MCF 10A (cell line): ENCODE measurements at regions of chr7 and their contacts with region 1.

Region 1: DNA sequence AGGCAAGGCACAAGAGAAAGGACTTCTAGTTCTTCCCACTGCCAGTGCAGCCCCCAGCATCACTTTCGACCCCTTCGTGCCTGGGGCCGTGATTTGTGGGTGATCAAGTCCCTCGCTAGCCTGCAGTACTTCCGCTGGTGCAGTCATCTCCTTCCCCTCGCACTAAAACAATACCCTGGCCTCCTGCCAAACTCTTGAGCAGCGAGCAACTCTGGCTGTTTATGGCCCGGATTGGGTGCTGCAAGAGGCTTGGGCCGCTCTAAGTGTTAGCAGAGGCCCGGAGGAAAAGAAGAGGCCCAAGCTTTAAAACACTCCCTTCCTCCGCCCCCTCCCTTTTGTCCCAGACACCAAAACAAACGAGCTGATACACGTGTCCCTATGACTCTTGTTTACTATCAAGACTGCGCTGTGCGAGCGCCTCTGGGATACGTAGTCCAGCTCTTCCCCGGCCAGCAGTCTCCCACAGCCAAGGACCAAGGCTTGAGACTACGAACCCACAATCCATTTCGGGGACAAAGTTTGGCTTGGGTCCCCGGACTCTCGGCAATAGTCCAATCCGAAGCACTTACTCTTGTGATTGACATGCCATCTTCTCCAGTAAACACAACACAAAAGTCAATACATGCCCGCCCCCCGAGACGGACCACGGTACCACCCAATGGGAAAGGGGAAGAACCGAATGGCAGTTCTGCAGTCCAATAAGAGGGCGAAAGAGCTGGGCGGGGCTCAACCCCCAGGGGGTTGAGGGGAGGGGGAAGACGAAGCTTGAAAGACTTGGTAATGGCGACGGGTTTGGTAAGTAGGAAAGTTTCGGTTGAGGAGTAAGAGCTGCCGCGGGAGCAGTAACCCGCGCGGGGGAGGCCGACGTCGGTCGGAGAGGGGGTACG is at the start of gene HBP1:
- DNase-seq: peak; percentile 100
- H3K4me3 Mint-ChIP-seq: peak within 1 kb of the TSS; percentile 93
- H3K27ac Mint-ChIP-seq: peak within 1 kb of the TSS; percentile 100
- H3K4me1 Mint-ChIP-seq: peaks cover 10% of the 10 kb centered on the region
- H3K27me3 Mint-ChIP-seq: no peaks in the 10 kb centered on the region
- CTCF ChIP-seq: no peak
- total RNA-seq, gene HBP1: 30.2 and 37.0 TPM in 2 replicates

Region 2: DNA sequence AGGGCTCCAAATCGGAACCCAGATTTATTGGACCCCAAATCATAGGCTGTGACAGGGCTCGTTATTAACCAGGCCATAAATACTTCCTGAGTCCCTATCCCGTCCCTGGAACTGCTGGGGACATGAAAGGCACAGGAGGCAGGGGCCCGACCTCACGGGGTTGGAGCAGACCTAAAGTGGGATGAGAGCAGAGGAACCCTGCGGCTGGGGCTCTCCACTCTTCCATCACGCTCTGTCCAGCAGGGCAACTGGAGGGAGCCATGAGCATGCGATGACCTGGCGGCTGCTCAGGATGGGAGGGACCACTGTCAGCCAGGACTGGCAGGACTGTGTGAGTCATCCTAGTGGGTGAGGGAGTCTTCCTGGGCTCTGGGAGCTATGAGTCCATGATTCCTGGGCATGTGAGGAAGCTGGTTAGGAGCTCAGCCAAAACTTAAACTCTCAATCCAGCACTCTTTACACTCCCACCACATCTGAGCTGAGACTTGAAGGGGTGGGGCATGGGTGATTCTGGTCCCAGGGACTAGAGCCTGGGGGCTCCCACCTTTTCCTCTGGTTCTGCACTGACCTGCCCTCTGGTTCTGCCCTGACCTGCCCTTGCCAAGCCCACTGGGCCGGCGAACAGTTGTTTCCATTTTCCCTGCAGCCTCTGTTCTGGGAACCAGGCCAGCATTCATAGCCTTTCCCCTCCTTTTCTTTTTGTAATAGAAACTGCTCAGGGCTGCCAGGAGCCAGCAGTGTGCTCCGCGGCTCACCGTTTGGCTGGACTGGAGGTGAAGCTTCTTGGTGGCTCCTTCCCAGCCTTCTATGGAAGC is 1103.5 kb before region 1 on chr7:
- CTCF ChIA-PET with region 1: no interaction called
- POLR2A ChIA-PET with region 1: interaction called, 5 read pairs
- intact Hi-C with region 1: loop called (anchors 10 kb)
- DNase-seq: peak; percentile 99
- H3K4me3 Mint-ChIP-seq: peak overlapping the region; percentile 60
- H3K27ac Mint-ChIP-seq: peak overlapping the region; percentile 86
- H3K4me1 Mint-ChIP-seq: peaks cover 66% of the 10 kb centered on the region
- H3K27me3 Mint-ChIP-seq: no peaks in the 10 kb centered on the region
- CTCF ChIP-seq: no peak

Region 3: DNA sequence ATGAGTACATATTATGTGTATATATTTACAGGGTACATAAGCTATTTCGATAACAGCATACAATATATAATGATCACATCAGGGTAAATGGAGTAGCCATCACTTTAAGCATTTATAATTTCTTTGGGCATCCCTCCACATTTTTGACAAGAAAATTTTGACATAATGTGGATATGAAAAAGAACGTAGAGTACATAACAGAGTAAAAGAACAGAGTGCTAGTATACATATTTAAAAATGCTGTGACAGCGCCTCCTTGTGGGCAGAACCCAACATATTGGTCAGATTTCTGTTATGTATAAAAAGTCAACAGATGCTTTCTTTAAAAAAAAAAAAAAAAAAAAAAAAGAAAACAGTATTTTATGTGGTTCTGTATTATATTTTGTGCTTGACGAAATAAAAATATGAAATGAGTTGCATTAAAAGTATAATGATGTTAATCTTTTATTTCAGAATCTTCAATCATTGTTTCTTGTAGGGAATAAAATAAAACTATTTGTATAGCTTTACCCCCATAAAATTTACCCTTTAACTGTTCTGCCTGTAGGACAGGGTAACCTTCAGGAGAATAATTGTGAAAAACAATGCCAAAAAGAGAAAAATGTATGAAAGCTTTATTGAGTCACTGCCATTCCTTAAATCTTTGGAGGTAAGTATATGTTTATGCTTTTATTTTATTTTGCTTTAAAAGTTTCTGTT is 18.0 kb before region 1 on chr7:
- CTCF ChIA-PET with region 1: interaction called, 99 read pairs
- POLR2A ChIA-PET with region 1: interaction called, 113 read pairs
- intact Hi-C with region 1: no loop called
- DNase-seq: peak; percentile 71
- H3K4me3 Mint-ChIP-seq: no peak overlapping the region
- H3K27ac Mint-ChIP-seq: no peak overlapping the region
- H3K4me1 Mint-ChIP-seq: peaks cover 12% of the 10 kb centered on the region
- H3K27me3 Mint-ChIP-seq: no peaks in the 10 kb centered on the region
- CTCF ChIP-seq: peak; percentile 59

Region 4: GRCh38 chr7:107180378-107180777 is 11.9 kb after region 1 on chr7:
- CTCF ChIA-PET with region 1: interaction called, 7 read pairs
- POLR2A ChIA-PET with region 1: interaction called, 126 read pairs
- intact Hi-C with region 1: no loop called
- DNase-seq: peak; percentile 93
- H3K4me3 Mint-ChIP-seq: peak overlapping the region; percentile 40
- H3K27ac Mint-ChIP-seq: no peak overlapping the region
- H3K4me1 Mint-ChIP-seq: peaks cover 19% of the 10 kb centered on the region
- H3K27me3 Mint-ChIP-seq: no peaks in the 10 kb centered on the region
- CTCF ChIP-seq: no peak

Region 5: DNA sequence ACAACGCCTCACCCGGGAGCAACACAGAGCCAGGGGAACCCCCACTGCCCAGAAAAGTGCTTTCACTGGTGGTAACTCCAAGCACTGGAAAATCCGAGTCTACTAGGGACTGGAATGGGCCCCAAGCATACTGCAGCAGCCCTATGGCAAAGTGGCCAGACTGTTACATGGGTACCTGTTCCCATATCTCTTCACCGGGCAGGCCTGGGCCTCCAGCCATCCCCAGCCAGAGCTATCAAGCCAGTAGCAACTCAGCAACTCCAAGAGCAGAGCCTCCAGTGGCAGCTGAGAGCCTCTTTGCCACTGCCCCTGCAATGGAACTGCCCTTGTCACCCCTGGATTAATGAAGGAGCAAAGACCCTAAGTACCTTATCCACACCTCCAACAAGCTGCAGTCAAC is 73.8 kb after region 1 on chr7:
- CTCF ChIA-PET with region 1: no interaction called
- POLR2A ChIA-PET with region 1: no interaction called
- intact Hi-C with region 1: no loop called
- DNase-seq: no peak
- H3K4me3 Mint-ChIP-seq: no peak overlapping the region
- H3K27ac Mint-ChIP-seq: no peak overlapping the region
- H3K4me1 Mint-ChIP-seq: no peaks in the 10 kb centered on the region
- H3K27me3 Mint-ChIP-seq: no peaks in the 10 kb centered on the region
- CTCF ChIP-seq: no peak

Region 6: GRCh38 chr7:107355616-107356015 is 187.1 kb after region 1 on chr7:
- CTCF ChIA-PET with region 1: no interaction called
- POLR2A ChIA-PET with region 1: no interaction called
- intact Hi-C with region 1: no loop called
- DNase-seq: no peak
- H3K4me3 Mint-ChIP-seq: no peak overlapping the region
- H3K27ac Mint-ChIP-seq: no peak overlapping the region
- H3K4me1 Mint-ChIP-seq: peaks cover 6% of the 10 kb centered on the region
- H3K27me3 Mint-ChIP-seq: no peaks in the 10 kb centered on the region
- CTCF ChIP-seq: no peak

Region 7: GRCh38 chr7:107563775-107564552 is 395.5 kb after region 1 on chr7 and contains the starts of genes COG5 and DUS4L:
- CTCF ChIA-PET with region 1: interaction called, 3 read pairs
- POLR2A ChIA-PET with region 1: interaction called, 27 read pairs
- intact Hi-C with region 1: no loop called
- DNase-seq: peak; percentile 80
- H3K4me3 Mint-ChIP-seq: peak within 1 kb of the TSS; percentile 75
- H3K27ac Mint-ChIP-seq: peak within 1 kb of the TSS; percentile 79
- H3K4me1 Mint-ChIP-seq: peaks cover 42% of the 10 kb centered on the region
- H3K27me3 Mint-ChIP-seq: no peaks in the 10 kb centered on the region
- CTCF ChIP-seq: no peak
- total RNA-seq, gene COG5: 40.3 and 40.9 TPM in 2 replicates
- total RNA-seq, gene DUS4L: 14.5 and 16.3 TPM in 2 replicates